Posterior vena cava (tissue), 2 donors: ENCODE measurements at regions of chr6 and their contacts with region 1.

Region 1: DNA sequence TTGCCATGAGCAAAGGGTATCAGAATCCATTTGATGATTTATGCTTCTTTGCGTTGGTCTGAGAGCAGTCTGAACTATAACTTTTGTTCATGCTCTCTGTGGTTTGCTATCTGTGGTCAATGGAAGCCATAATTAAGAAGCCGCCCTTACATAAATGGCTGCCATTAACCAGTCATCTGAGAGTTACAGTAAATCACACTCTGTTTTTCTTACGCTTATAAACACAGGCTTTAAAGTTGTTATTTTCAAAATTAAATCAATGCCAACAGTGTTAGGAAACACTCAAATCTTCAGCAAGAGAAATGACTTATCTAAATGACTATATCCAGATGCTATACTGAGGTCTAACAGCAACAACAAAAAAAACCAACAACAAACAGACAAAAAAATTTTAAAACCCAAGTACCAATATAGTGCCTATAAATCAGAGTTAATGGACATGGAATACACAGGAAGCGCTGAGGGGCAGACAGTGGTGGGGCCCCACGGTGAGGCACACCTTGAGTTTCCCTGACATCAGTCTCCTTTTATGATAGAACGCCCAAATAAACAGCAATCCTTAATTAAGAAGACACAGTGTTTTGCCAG is 108.0 kb upstream of the C6orf118 start:
- DNase-seq: no peak

Region 2: DNA sequence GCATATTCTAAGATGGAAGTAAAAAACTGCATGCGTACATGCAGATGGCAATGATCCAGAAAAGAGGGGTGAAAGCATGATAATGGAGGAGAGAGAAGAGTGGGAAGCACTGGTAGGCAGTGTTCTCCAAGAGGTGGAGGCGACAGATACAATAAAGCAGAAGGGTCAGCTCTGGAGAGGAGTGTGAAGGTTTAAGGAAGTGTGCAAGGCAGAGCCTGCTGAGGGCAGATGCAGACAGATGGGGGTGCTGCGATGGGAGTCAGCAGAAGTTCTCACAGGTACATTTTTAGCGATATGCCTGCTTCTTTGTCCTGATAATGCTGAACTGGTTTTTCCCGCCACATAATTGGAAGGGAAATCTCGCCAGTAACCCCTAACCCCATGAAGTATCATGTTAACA is 26.9 kb before region 1 on chr6:
- intact Hi-C with region 1: no loop called
- DNase-seq: no peak

Region 3: DNA sequence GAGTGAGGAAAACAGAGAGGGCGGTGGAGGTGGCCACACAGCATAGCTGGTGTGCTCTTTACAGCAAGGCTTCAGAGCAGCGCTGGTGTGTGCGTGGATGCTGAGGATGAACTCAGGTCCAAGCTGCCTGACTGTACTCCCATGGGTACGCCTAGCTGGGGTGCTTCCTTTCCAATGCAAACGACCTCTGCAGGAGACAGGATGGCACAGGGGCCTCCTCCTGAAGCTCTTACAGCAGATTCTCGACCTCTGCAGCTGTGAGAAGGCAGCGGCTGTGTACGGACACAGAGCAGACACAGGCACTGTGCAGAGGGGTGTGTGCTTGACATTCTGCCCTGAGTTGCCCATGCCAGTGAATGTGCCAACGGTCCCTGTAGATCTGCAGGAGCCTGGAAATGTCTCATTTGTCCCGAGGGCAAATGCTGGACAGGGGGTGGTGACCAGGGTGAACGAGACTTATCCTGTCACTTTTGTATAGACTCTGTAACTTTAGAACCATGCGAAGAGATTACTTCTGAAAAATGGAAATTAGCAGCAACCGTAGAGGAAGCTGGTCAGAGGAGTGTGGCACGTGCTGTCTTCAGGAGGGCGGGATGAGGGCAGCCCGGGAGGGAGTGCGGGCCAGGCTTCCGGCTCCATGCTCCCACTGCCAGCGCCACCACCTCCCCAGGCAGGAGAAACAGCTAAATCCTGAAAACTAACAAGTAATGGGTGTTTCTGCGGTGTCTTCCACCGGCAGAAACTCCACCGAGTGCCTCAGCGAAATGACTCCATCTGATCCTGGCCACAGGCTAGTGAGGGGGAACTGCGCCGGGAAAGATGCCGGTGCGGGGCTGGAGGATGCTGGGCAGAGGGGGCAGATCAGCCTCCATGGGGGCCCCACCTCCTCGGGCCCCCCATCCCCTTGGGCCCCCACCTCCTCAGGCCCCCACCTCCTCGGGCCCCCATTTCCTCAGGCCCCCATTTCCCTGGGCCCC is 1330.6 kb after region 1 on chr6:
- intact Hi-C with region 1: loop called in 1 of 2 experiments (anchors 5 kb)
- DNase-seq: no peak